Activated naive CD4-positive, alpha-beta T cell treated with anti-CD3 and anti-CD28 coated beads, Interleukin-2, amount 10 ng/mL, durations not matched to agents 7 days and 5 days (primary cell): ENCODE measurements at regions of chr17 and their contacts with region 1.

Region 1: DNA sequence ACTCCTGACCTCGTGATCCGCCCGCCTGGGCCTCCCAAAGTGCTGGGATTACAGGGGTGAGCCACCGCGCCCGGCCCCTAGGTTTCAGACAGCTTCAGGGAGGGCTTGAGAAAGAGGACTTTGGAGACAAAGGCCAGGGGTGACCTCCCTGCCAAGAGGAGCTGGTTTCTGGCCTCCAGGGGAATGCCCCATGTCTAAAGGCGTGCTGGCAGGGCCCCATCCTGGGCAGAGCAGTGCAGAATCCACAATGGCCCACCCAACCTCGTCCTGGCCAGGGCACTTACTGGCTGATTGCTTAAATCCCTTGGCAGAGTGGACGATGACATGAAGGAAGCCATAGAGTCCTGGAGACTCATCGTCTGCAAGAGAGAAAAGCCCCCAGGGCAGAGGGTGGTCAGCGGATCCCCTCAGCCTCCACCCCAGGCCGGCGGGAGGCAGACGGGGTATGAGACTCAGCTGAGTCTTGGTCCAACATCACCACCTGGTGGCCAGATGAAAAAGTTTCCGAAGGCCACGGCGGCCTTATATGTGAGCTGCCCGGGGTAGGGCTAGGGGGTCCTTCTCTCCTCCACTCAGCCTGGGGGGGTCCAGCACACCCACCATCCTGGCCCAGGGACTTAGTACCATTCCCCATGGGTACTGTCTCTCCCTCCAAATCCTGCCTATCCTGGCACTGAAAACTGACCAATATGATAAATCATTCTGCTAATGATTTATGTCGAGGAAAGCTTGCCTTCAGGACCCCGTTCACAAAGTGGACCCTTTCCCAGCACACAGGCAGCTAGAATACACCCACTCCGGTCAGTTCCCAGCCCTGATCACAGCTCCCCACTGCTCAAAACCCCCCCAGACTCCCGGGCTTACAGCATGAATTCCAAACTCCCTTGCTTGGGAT is 59.1 kb downstream of the TIMM22 start:
- DNase-seq: peak; percentile 62
- H3K4me3 Mint-ChIP-seq: no peak overlapping the region
- H3K27ac Mint-ChIP-seq: peak overlapping the region; percentile 11
- H3K4me1 Mint-ChIP-seq: no peaks in the 10 kb centered on the region
- H3K27me3 Mint-ChIP-seq: no peaks in the 10 kb centered on the region

Region 2: DNA sequence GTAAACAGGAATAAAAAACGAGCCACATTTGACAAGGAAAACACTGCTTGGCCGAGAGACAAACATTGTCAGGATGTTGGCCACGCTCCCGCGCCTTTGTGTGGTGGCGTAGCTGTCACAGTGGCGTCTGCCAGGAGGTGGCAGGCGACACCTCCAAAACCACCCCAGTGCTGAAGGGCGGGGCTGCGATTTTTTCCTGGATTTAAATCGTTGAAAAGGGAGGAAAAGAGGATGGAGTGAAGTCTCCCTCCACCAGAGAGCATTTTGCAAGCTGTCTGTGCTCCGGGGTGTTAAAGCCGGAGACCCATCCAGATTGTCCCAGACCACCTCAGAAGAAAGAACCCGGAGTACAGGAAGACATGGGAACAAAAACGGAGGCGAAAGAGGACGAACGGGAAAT is 261.1 kb before region 1 on chr17:
- CTCF ChIA-PET with region 1: interaction called, 13 read pairs
- DNase-seq: peak; percentile 66
- H3K4me3 Mint-ChIP-seq: no peak overlapping the region
- H3K27ac Mint-ChIP-seq: no peak overlapping the region
- H3K4me1 Mint-ChIP-seq: peaks cover 7% of the 10 kb centered on the region
- H3K27me3 Mint-ChIP-seq: no peaks in the 10 kb centered on the region

Region 3: GRCh38 chr17:927611-928461 is 128.2 kb before region 1 on chr17:
- CTCF ChIA-PET with region 1: no interaction called
- DNase-seq: no peak
- H3K4me3 Mint-ChIP-seq: no peak overlapping the region
- H3K27ac Mint-ChIP-seq: no peak overlapping the region
- H3K4me1 Mint-ChIP-seq: no peaks in the 10 kb centered on the region
- H3K27me3 Mint-ChIP-seq: peaks cover 24% of the 10 kb centered on the region

Region 4: GRCh38 chr17:1031711-1032110 is 24.3 kb before region 1 on chr17:
- CTCF ChIA-PET with region 1: no interaction called
- DNase-seq: no peak
- H3K4me3 Mint-ChIP-seq: no peak overlapping the region
- H3K27ac Mint-ChIP-seq: no peak overlapping the region
- H3K4me1 Mint-ChIP-seq: no peaks in the 10 kb centered on the region
- H3K27me3 Mint-ChIP-seq: no peaks in the 10 kb centered on the region

Region 5: DNA sequence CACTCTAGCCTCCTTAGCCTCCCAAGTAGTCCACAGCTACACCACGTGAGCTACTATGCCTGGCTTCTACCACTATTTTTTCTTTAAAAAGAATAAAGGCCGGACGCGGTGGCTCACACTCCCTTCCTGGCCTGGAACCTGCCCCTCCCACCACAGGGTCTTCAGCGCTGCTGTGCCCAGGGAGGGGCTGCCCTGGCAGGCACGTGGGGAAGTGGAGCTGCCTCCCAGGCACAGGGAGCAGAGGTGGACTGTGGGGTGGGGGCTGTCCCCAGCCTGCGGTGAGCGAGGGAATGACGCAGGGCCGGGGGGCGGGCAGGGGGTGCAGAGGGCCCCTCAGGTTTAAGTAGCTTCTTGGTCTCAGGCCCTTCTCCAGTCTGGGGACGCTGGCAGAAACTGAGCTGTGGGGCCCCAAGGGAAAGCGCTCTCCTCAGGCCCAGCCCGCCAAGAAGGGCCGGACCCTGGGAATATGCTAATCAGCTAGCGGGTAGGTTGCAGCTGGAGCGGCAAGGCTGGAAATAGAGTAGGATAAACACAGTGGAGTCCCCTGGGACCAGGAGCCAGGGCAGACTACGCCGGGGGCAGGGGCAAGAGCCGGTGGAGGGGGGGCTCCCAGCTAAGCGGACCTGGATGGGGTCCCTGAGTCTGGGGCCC is 12.3 kb before region 1 on chr17:
- CTCF ChIA-PET with region 1: interaction called, 10 read pairs
- DNase-seq: no peak
- H3K4me3 Mint-ChIP-seq: no peak overlapping the region
- H3K27ac Mint-ChIP-seq: no peak overlapping the region
- H3K4me1 Mint-ChIP-seq: no peaks in the 10 kb centered on the region
- H3K27me3 Mint-ChIP-seq: no peaks in the 10 kb centered on the region

Region 6: GRCh38 chr17:1153795-1154546 is 98.0 kb after region 1 on chr17:
- CTCF ChIA-PET with region 1: no interaction called
- DNase-seq: no peak
- H3K4me3 Mint-ChIP-seq: no peak overlapping the region
- H3K27ac Mint-ChIP-seq: no peak overlapping the region
- H3K4me1 Mint-ChIP-seq: no peaks in the 10 kb centered on the region
- H3K27me3 Mint-ChIP-seq: no peaks in the 10 kb centered on the region

Region 7: GRCh38 chr17:1186923-1187771 is 131.1 kb after region 1 on chr17:
- CTCF ChIA-PET with region 1: interaction called, 13 read pairs
- DNase-seq: peak; percentile 80
- H3K4me3 Mint-ChIP-seq: no peak overlapping the region
- H3K27ac Mint-ChIP-seq: no peak overlapping the region
- H3K4me1 Mint-ChIP-seq: peaks cover 7% of the 10 kb centered on the region
- H3K27me3 Mint-ChIP-seq: peaks cover 82% of the 10 kb centered on the region